BJ (cell line): ENCODE measurements at regions of chr6 and their contacts with region 1.

Region 1: GRCh38 chr6:34414999-34415858 is 10.6 kb downstream of the RPS10 start:
- DNase-seq: no peak
- H3K4me3 ChIP-seq: no peak overlapping the region
- H3K27me3 ChIP-seq: no peaks in the 10 kb centered on the region
- CTCF ChIP-seq: peak; percentile 44

Region 2: GRCh38 chr6:34295721-34296120 is 119.5 kb before region 1 on chr6:
- CTCF ChIA-PET with region 1: no interaction called
- POLR2A ChIA-PET with region 1: no interaction called
- DNase-seq: no peak
- H3K4me3 ChIP-seq: no peak overlapping the region
- H3K27me3 ChIP-seq: no peaks in the 10 kb centered on the region
- CTCF ChIP-seq: no peak

Region 3: GRCh38 chr6:34350137-34350933 is 64.9 kb before region 1 on chr6:
- CTCF ChIA-PET with region 1: no interaction called
- POLR2A ChIA-PET with region 1: no interaction called
- DNase-seq: no peak
- H3K4me3 ChIP-seq: no peak overlapping the region
- H3K27me3 ChIP-seq: no peaks in the 10 kb centered on the region
- CTCF ChIP-seq: no peak

Region 4: GRCh38 chr6:34425498-34426410 is 10.5 kb after region 1 on chr6 and contains the start of gene RPS10:
- CTCF ChIA-PET with region 1: interaction called, 4 read pairs
- POLR2A ChIA-PET with region 1: interaction called, 16 read pairs
- DNase-seq: peak; percentile 52
- H3K4me3 ChIP-seq: peak within 1 kb of the TSS; percentile 98
- H3K27me3 ChIP-seq: no peaks in the 10 kb centered on the region
- CTCF ChIP-seq: no peak
- polyA plus RNA-seq, gene RPS10: 2,590 and 3,048 TPM in 2 replicates